Panc1 (cell line): ENCODE measurements at regions of chr5 and their contacts with region 1.

Region 1: GRCh38 chr5:103041071-103041676 is 78.8 kb downstream of the GIN1 start:
- DNase-seq: peak; percentile 36
- ATAC-seq: peak; percentile 48; the same call in 1 of the 2 replicates
- H3K4me3 ChIP-seq: no peak overlapping the region
- H3K27ac ChIP-seq: no peak overlapping the region
- H3K4me1 ChIP-seq: no peaks in the 10 kb centered on the region
- H3K27me3 ChIP-seq: no peaks in the 10 kb centered on the region
- CTCF ChIP-seq: peak; percentile 61; the same call in 1 of the 2 replicates

Region 2: GRCh38 chr5:102536323-102536928 is 504.7 kb before region 1 on chr5:
- CTCF ChIA-PET with region 1: no interaction called
- POLR2A ChIA-PET with region 1: no interaction called
- in situ Hi-C with region 1: no loop called
- intact Hi-C with region 1: loop called (anchors 5 kb)
- DNase-seq: no peak
- ATAC-seq: no peak
- H3K4me3 ChIP-seq: no peak overlapping the region
- H3K27ac ChIP-seq: no peak overlapping the region
- H3K4me1 ChIP-seq: no peaks in the 10 kb centered on the region
- H3K27me3 ChIP-seq: no peaks in the 10 kb centered on the region; the same call in 1 of the 2 replicates
- CTCF ChIP-seq: peak; percentile 49; the same call in 1 of the 2 replicates

Region 3: DNA sequence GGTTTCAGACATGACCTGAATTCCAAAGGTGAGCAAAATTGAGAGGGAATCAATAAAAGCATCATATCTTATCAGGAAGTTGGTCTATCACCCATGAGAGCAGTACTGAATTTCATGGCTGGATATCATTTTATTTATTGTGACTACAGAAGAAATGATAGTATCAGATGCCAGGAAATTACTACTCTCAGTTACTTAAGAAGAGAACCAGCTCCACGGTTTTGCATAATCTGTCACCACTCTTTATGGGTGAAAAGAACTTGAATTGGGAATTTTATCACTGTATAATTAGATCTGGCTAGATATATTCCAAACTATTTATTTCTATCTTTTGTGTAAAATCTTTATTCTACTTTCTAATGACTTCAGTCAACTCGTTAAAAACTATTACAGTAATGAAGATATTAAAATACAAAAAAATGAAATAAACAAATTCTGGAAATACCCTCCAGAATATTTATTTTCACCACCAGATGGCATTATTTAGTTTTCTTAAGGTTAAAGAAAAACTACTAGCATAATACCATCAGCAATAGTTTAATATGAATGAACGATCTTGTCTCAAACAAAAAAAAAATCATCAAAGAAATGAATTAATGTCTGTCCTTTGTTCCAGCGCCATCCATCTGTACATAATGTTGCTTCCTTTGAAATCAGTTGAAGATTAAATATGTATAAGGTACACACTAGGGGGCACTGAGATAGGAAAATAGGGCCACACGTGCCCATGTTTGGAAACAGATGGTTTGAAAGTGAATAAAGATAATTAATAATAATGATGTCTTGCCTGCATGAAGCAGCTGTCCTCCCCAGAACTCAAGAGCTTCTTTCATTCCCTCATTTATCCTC is 457.7 kb before region 1 on chr5:
- CTCF ChIA-PET with region 1: no interaction called
- POLR2A ChIA-PET with region 1: no interaction called
- in situ Hi-C with region 1: no loop called
- intact Hi-C with region 1: loop called (anchors 1 kb)
- DNase-seq: no peak
- ATAC-seq: no peak
- H3K4me3 ChIP-seq: no peak overlapping the region
- H3K27ac ChIP-seq: no peak overlapping the region
- H3K4me1 ChIP-seq: no peaks in the 10 kb centered on the region
- H3K27me3 ChIP-seq: no peaks in the 10 kb centered on the region
- CTCF ChIP-seq: peak; percentile 45; the same call in 1 of the 2 replicates

Region 4: DNA sequence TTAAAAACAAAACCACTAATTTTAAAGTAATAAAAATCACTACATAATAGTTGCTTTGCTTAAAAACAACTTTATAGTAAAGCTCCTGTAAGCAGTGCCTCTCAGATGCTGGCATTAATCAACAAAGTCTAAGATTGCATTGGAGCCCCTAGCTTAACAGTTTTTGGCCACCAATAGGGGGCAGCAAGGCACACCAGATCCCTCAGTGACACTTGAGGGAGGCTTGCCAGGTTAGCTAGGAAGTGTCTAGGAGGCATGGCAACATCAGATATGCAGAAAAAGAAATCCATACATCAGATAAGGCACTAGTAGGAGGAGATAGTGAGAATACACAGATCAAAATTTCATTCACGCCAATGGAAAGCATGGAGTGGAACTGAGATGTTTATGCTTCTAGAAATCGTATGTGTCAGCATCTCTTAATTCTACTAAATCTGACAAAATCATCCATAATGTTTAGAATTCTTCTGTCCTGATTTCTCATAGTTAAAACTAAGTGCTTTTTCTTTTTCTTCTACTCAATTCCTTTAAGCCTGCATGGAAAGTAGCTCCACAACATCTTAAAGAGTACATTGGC is 359.7 kb before region 1 on chr5:
- CTCF ChIA-PET with region 1: interaction called, 3 read pairs
- POLR2A ChIA-PET with region 1: no interaction called
- in situ Hi-C with region 1: no loop called
- intact Hi-C with region 1: loop called (anchors 2 kb)
- DNase-seq: peak; percentile 48
- ATAC-seq: peak; percentile 77; the same call in 1 of the 2 replicates
- H3K4me3 ChIP-seq: no peak overlapping the region
- H3K27ac ChIP-seq: no peak overlapping the region
- H3K4me1 ChIP-seq: no peaks in the 10 kb centered on the region
- H3K27me3 ChIP-seq: no peaks in the 10 kb centered on the region; the same call in 1 of the 2 replicates
- CTCF ChIP-seq: peak; percentile 87

Region 5: GRCh38 chr5:102782311-102782770 is 258.8 kb before region 1 on chr5:
- CTCF ChIA-PET with region 1: interaction called, 5 read pairs
- POLR2A ChIA-PET with region 1: no interaction called
- in situ Hi-C with region 1: no loop called
- intact Hi-C with region 1: loop called (anchors 5 kb)
- DNase-seq: no peak
- ATAC-seq: no peak
- H3K4me3 ChIP-seq: no peak overlapping the region
- H3K27ac ChIP-seq: no peak overlapping the region
- H3K4me1 ChIP-seq: no peaks in the 10 kb centered on the region
- H3K27me3 ChIP-seq: no peaks in the 10 kb centered on the region
- CTCF ChIP-seq: no peak

Region 6: GRCh38 chr5:103139264-103139865 is 98.2 kb after region 1 on chr5:
- CTCF ChIA-PET with region 1: no interaction called
- POLR2A ChIA-PET with region 1: no interaction called
- in situ Hi-C with region 1: no loop called
- intact Hi-C with region 1: loop called (anchors 2 kb)
- DNase-seq: peak; percentile 39
- ATAC-seq: peak; percentile 98
- H3K4me3 ChIP-seq: no peak overlapping the region
- H3K27ac ChIP-seq: no peak overlapping the region
- H3K4me1 ChIP-seq: no peaks in the 10 kb centered on the region
- H3K27me3 ChIP-seq: no peaks in the 10 kb centered on the region
- CTCF ChIP-seq: peak; percentile 89